CD4-positive, alpha-beta T cell (primary cell): ENCODE measurements at regions of chr3 and their contacts with region 1.

Region 1: DNA sequence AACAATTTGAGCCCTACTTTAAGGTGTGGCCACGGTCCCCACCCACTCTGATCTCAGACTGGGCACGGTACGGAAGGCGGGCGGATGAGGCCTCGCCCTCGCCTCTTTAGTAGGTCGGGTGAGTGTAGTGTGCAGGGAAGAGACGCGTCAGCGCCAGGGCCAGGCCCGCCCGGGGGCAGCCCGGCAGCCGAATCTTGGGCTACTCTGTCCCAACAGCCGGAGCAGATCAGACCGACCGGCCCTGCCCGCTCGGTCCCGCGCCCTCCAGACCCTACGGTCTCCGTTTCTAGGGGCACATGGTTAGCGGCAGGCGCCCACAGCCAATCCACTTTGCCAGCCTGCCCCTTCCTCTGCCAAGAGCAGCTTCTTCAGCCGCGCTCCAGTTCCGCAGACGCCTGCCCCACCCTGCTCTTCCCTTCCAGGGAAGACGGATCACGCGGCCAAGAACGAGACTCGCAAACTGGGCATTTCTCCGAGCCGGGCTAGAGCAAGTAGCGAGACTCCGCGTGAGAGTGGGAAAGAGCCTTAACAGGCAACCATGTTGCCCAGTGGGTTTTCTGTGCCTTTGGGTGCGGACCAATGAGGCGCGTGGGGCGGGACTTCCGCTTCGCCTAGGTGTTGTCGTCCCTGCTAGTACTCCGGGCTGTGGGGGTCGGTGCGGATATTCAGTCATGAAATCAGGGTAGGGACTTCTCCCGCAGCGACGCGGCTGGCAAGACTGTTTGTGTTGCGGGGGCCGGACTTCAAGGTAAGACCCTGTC is at the start of gene RNF13:
- DNase-seq: peak; percentile 82 to 95 (median 90)
- ATAC-seq: peak; percentile 95
- H3K4me3 ChIP-seq: peak within 1 kb of the TSS; percentile 78
- H3K4me3 Mint-ChIP-seq: peak within 1 kb of the TSS; percentile 98
- H3K27ac ChIP-seq: peak within 1 kb of the TSS; percentile 86 to 95
- H3K27ac Mint-ChIP-seq: peak within 1 kb of the TSS; percentile 96
- H3K4me1 ChIP-seq: peaks cover 23% of the 10 kb centered on the region
- H3K4me1 Mint-ChIP-seq: peaks cover 60% of the 10 kb centered on the region
- H3K27me3 ChIP-seq: no peaks in the 10 kb centered on the region
- H3K27me3 Mint-ChIP-seq: peaks cover 4% of the 10 kb centered on the region
- CTCF ChIP-seq: no peak
- total RNA-seq, gene RNF13: 39.1 to 44.1 TPM

Region 2: DNA sequence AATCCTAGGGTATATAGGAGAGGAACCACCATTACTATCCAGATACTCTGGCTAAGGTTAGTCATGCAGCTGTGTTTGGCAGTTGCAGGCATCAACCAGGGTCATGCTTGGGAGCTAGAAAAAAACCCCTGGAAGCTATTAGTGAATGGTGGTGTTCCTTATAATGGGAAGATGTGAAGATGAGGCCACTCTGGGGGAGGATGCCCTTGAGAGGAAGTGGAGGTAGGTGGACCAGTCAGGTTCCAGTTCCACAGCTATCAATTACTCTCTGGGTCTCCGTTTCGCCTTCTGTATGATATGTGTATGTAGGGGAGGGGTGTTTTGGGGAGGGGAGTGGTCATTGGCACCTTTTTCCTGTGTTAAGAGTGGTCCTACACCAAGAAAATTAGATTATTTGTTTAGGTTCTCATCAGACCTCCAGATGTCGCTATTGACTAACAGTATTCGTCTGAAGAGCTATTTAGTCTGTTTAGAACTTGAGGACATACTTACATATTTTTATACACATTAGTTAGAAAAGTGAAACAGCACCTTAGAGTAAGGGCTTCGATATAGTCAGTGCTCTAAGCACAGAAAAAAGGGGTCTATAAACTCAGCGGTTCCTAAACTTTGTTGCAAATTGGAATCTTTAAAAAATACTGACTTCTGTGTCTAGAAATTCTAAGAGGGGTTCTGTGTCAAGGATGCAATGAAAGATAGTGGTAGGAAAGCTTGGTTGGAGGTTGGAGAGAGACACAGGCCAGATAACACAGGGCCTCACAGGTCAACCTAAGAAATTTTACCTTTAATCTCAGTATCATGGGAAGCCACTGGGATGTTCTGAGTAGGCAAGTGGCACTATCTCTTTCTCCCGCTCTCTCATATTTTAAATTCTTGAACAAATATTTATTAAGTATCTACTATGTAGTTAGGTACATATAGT is 692.5 kb before region 1 on chr3:
- CTCF ChIA-PET with region 1: interaction called, 4 read pairs
- POLR2A ChIA-PET with region 1: no interaction called
- intact Hi-C with region 1: loop called in 1 of 2 experiments (anchors 2 kb)
- DNase-seq: peak in 4 of 14 experiments; percentile 25 to 79 (median 73)
- ATAC-seq: peak; percentile 81
- H3K4me3 ChIP-seq: no peak overlapping the region
- H3K4me3 Mint-ChIP-seq: no peak overlapping the region
- H3K27ac ChIP-seq: no peak overlapping the region
- H3K27ac Mint-ChIP-seq: no peak overlapping the region
- H3K4me1 ChIP-seq: no peaks in the 10 kb centered on the region
- H3K4me1 Mint-ChIP-seq: no peaks in the 10 kb centered on the region
- H3K27me3 ChIP-seq: no peaks in the 10 kb centered on the region
- H3K27me3 Mint-ChIP-seq: peaks cover 4% of the 10 kb centered on the region
- CTCF ChIP-seq: peak; percentile 73

Region 3: DNA sequence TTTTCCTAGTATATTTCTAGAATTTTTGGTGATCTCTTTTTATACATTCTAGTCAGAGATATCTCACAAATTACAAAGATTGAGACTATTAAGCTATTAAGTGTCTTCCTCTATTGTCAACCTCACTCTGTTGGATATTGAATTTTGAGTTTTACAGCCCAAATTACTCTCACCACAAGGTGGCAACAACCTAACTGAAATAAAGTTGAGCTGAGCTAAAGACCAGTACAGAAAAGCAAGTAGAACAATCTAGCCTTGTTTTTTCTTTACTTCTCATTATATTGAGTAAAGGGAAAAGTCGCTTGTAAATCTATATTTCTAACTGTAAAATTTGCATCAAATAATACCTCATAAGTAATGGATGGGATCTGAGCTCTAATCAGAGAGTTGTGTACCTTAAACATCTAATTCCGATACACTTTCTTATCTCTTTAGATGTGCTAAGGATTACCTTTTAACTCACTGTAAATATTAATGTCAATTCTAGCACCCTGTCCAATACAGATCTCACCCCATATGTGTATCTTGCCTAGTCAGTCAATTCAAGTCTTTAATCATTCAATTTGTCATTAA is 46.9 kb before region 1 on chr3:
- CTCF ChIA-PET with region 1: interaction called, 4 read pairs
- POLR2A ChIA-PET with region 1: no interaction called
- intact Hi-C with region 1: loop called in 1 of 2 experiments (anchors 2 kb)
- DNase-seq: peak in 1 of 14 experiments; percentile 18
- ATAC-seq: no peak
- H3K4me3 ChIP-seq: no peak overlapping the region
- H3K4me3 Mint-ChIP-seq: no peak overlapping the region
- H3K27ac ChIP-seq: no peak overlapping the region
- H3K27ac Mint-ChIP-seq: no peak overlapping the region
- H3K4me1 ChIP-seq: no peaks in the 10 kb centered on the region
- H3K4me1 Mint-ChIP-seq: no peaks in the 10 kb centered on the region
- H3K27me3 ChIP-seq: peaks cover 6 to 34% of the 10 kb centered on the region in 2 experiments
- H3K27me3 Mint-ChIP-seq: peaks cover 19% of the 10 kb centered on the region
- CTCF ChIP-seq: peak; percentile 25

Region 4: GRCh38 chr3:149969940-149970715 is 157.3 kb after region 1 on chr3:
- CTCF ChIA-PET with region 1: no interaction called
- POLR2A ChIA-PET with region 1: interaction called, 3 read pairs
- intact Hi-C with region 1: loop called in 1 of 2 experiments (anchors 5 kb)
- DNase-seq: peak; percentile 66 to 90 (median 74)
- ATAC-seq: peak; percentile 55
- H3K4me3 ChIP-seq: peak overlapping the region; percentile 53
- H3K4me3 Mint-ChIP-seq: peak overlapping the region; percentile 94
- H3K27ac ChIP-seq: no peak overlapping the region
- H3K27ac Mint-ChIP-seq: peak overlapping the region; percentile 57
- H3K4me1 ChIP-seq: peaks cover 13% of the 10 kb centered on the region
- H3K4me1 Mint-ChIP-seq: peaks cover 27% of the 10 kb centered on the region
- H3K27me3 ChIP-seq: peaks cover 3 to 20% of the 10 kb centered on the region in 2 experiments
- H3K27me3 Mint-ChIP-seq: peaks cover 36% of the 10 kb centered on the region
- CTCF ChIP-seq: no peak